ENCODE measurements at regions of chr3 and their contacts with region 1.

Region 1: GRCh38 chr3:98593046-98593936 is at the start of gene CPOX:
- DNase-seq: peak; percentile 89 to 91
- ATAC-seq: peak; percentile 97 to 99 (median 98)
- H3K4me3 ChIP-seq: peak within 1 kb of the TSS; percentile 65 to 86 (median 78)
- H3K27ac ChIP-seq: peak within 1 kb of the TSS; percentile 27 to 93 (median 82)
- H3K4me1 ChIP-seq: peaks cover 0 to 37% (median 23%) of the 10 kb centered on the region in 9 donors
- H3K27me3 ChIP-seq: no peaks in the 10 kb centered on the region
- CTCF ChIP-seq: peak in 1 of 9 donors; percentile 7
- total RNA-seq, gene CPOX: 7.7 to 12.5 (median 11.0) TPM

Region 2: DNA sequence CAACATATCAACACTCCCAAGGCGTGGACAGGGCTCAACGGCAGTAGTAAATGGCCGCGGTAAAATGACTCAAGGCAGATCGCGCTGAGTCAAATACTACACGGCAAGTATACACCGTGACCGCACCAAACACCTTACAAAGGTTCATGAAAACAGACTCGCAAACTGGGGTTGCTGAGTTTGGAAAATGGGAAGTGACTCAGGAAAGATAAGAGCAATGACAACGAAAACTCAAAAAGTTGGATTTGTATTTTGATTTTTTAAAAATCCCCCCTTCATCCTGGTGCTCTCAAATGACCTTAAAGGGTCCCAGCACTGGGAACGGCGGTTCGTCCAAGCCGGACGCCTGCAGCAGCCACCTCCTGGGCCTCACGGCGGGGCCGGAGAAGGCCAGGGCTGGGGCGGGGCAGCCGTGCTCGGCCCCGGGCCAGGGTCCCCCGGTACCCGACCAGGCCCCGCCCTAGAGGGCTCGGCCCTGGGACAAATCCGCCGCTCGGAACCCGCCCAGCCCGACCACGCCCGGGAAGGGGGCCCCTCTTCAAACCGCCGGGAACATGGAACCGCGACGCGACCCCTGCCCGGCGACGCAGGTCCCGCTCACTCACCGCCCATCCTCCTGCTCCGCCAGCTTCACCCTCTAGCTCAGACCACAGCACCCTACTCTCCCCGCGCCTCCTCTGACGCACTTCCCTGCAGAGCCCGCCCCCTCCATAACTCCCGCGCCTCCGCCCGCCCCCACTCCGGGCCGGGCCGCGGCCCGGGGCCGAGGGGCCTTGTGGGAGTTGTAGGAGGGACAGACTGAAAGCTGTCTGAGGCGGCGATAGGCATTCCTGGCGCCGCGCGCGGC is 70.8 kb before region 1 on chr3 and contains the start of gene CLDND1:
- intact Hi-C with region 1: loop called in 6 of 10 experiments (anchors 1 to 5 kb)
- DNase-seq: peak; percentile 98
- ATAC-seq: peak; percentile 99 to 100 (median 100)
- H3K4me3 ChIP-seq: peak within 1 kb of the TSS; percentile 67 to 91 (median 78)
- H3K27ac ChIP-seq: peak within 1 kb of the TSS; percentile 92 to 99 (median 96)
- H3K4me1 ChIP-seq: peaks cover 0 to 41% (median 18%) of the 10 kb centered on the region in 9 donors
- H3K27me3 ChIP-seq: no peaks in the 10 kb centered on the region
- CTCF ChIP-seq: no peak
- total RNA-seq, gene CLDND1: 58.1 to 99.6 (median 75.5) TPM

Region 3: GRCh38 chr3:98612587-98612986 is 19.3 kb after region 1 on chr3:
- intact Hi-C with region 1: no loop called
- DNase-seq: peak in 1 of 2 donors; percentile 12
- ATAC-seq: peak in 1 of 8 donors; percentile 20
- H3K4me3 ChIP-seq: no peak overlapping the region
- H3K27ac ChIP-seq: peak overlapping the region in 1 of 10 donors; percentile 69
- H3K4me1 ChIP-seq: no peaks in the 10 kb centered on the region
- H3K27me3 ChIP-seq: no peaks in the 10 kb centered on the region
- CTCF ChIP-seq: peak in 1 of 9 donors; percentile 7

Region 4: DNA sequence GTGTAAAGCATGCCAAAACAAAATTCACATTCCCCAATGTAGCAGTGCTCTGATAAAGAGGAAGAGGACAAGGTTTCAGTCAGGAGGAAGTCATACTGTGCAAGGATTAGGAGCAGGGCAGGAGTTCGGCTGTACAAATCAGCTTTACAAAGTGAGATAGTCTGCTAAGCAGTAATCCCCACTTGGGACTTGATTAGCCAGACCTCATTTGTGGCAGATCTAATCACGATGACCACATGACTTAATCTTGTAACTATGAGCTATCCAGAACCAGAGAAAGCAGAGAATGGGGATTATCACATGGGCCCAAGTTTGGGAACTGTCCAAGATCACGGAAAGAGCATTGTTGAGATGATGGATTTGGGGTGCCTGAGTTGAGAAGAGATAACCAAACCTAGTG is 300.4 kb after region 1 on chr3:
- intact Hi-C with region 1: loop called in 1 of 10 experiments (anchors 5 kb)
- DNase-seq: no peak
- ATAC-seq: peak in 6 of 8 donors; percentile 38 to 61 (median 53)
- H3K4me3 ChIP-seq: no peak overlapping the region
- H3K27ac ChIP-seq: peak overlapping the region in 4 of 10 donors; percentile 10 to 37 (median 28)
- H3K4me1 ChIP-seq: peaks cover 4 to 81% (median 60%) of the 10 kb centered on the region in 9 donors
- H3K27me3 ChIP-seq: no peaks in the 10 kb centered on the region
- CTCF ChIP-seq: no peak

Region 5: DNA sequence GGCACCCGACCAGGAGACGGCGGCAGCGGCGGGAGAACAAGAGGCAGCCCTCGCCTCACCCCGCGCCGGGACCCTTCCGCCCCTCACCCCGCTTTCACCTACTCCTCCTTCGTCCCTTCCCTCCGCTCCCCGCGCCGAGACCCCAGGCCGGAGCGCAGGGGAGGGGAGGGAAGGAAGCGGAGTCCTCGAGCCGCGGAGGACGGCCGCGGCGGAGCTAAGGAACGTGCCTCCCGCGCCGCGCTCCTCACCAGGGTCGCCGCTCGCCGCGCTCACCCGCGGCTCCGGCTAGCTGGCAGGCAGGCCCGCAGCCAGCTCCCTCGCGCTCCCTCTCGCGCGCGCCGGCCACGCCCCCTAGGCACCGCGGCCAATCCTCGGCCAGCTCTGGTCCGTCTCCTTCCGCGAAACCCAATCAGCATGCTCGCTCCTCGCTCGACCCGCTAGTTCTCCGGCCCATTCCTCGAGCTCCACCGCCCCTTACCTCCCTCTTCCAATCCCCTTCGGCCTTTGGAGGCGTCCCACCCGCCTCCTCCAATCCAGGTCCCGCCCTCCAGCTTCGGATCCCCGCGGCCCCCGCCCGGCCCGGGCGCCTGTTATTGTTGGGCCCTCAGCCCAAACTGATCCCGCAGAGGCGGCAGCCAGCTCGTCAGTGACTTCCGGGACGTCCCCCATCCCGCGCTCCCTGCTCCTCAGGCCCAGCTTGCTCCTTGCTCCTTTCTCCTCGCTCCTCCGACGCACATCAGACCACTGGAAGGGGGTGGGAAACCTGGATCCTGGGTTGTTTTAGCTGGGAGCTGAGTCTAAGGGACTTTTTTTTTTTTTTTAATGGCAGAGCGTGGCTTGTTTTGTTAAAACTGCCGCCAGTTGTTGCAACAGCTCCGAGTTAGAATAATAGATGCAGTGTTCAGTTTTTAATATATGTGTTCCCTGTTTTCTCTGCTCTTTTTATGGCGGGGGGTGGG is 308.4 kb after region 1 on chr3 and contains the start of gene DCBLD2:
- intact Hi-C with region 1: loop called in 2 of 10 experiments (anchors 5 to 10 kb)
- DNase-seq: peak; percentile 97 to 99
- ATAC-seq: peak; percentile 98 to 99 (median 99)
- H3K4me3 ChIP-seq: peak within 1 kb of the TSS; percentile 71 to 98 (median 90)
- H3K27ac ChIP-seq: peak within 1 kb of the TSS; percentile 82 to 96 (median 94)
- H3K4me1 ChIP-seq: peaks cover 0 to 47% (median 22%) of the 10 kb centered on the region in 9 donors
- H3K27me3 ChIP-seq: peaks cover 0 to 9% (median 0%) of the 10 kb centered on the region in 7 donors
- CTCF ChIP-seq: no peak
- total RNA-seq, gene DCBLD2: 24.6 to 97.4 (median 48.4) TPM

Region 6: DNA sequence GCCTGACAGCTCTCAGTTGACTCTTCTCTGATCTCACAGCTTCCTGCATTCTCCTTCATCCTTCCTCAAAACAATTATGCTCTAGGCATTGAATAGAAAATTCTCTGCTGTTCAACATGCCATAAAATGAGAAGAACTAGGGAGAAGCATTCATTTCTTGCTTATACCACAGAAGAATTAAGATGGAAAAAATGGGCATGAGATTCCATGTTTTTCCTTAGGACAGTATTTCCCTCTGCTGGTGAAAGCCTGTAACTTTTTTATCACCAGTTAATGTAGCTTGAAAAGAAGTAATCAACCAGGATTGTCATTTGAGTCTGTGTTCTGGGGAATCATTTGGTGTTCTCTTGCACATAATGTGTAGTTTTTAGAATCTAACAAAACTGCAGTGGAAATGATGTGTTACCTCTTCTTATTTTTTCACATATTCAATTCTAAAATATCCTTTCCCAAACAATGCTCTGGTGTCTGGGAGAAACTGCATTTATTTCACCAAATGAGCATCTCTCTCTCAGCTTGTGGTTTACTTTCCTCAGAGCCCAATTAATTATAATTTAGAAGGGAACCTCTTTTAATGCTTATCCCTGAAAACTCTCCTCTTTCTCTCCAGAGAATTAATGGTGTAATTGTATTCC is 401.0 kb after region 1 on chr3:
- intact Hi-C with region 1: loop called in 4 of 10 experiments (anchors 5 to 10 kb)
- DNase-seq: no peak
- ATAC-seq: peak in 2 of 8 donors; percentile 42
- H3K4me3 ChIP-seq: no peak overlapping the region
- H3K27ac ChIP-seq: no peak overlapping the region
- H3K4me1 ChIP-seq: no peaks in the 10 kb centered on the region
- H3K27me3 ChIP-seq: no peaks in the 10 kb centered on the region
- CTCF ChIP-seq: peak; percentile 48 to 81 (median 70)

Region 7: DNA sequence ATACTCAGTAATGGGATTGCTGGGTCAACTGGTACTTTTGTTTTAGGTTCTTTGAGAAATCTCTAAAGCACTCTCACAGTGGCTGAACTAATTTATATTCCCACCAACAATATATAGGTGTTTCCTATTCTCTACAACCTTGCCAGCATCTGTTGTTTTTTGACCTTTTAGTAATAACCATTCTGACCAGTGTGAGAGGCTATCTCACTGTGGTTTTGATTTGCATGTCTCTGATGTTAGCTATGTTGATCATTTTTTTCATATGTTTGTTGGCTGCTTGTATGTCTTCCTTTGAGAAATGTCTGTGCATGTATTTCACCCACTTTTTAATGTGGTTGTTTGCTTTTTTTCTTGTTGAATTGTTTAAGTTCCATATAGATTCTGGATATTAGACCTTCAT is 406.4 kb after region 1 on chr3:
- intact Hi-C with region 1: loop called in 4 of 10 experiments (anchors 5 to 10 kb)
- DNase-seq: no peak
- ATAC-seq: no peak
- H3K4me3 ChIP-seq: no peak overlapping the region
- H3K27ac ChIP-seq: no peak overlapping the region
- H3K4me1 ChIP-seq: no peaks in the 10 kb centered on the region
- H3K27me3 ChIP-seq: no peaks in the 10 kb centered on the region
- CTCF ChIP-seq: no peak

Region 8: DNA sequence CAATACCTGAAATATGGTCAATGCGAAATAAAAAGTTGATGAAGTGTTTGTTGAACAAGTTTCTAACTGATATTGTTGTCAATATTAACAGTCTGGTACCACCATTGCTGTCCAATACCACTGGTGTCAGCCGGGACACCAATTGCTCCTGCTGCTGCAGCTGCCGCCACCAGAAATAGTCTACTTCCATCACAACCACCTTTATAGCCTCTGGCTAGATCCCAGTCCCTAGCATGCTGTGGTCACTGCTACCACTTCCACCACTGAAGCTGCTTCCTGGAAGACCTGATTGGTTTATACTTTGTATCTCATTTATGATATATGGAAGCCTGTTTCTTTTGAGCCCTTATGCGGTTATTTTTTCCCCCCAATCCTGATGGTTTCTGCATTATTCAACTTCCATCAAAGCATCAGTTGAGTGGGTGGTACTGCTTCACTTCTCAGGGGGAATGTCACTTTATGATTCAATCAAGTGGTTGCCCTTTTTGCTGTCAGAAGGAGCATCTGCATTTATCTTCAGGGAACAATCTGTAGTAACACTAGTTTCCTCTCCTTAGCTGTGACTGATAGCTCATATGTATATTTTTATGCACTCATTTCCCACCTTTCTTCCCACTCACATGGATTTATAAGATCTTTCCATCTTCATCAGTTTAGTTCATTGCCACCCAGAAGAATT is 1819.8 kb after region 1 on chr3:
- intact Hi-C with region 1: no loop called
- DNase-seq: peak in 1 of 2 donors; percentile 28
- ATAC-seq: peak in 4 of 8 donors; percentile 39 to 67 (median 60)
- H3K4me3 ChIP-seq: no peak overlapping the region
- H3K27ac ChIP-seq: no peak overlapping the region
- H3K4me1 ChIP-seq: no peaks in the 10 kb centered on the region
- H3K27me3 ChIP-seq: no peaks in the 10 kb centered on the region
- CTCF ChIP-seq: no peak

Measured in heart right ventricle (tissue), 16 donors.